ENCODE measurements at regions of chr9 and their contacts with region 1.

Region 1: GRCh38 chr9:19732441-19732951 is 56.3 kb downstream of the SLC24A2 start:
- DNase-seq: no peak
- ATAC-seq: no peak
- H3K4me3 ChIP-seq: no peak overlapping the region
- H3K27ac ChIP-seq: no peak overlapping the region
- H3K4me1 ChIP-seq: no peaks in the 10 kb centered on the region
- H3K27me3 ChIP-seq: no peaks in the 10 kb centered on the region
- CTCF ChIP-seq: no peak
- POLR2A ChIP-seq: no peak
- RAD21 ChIP-seq: no peak

Region 2: GRCh38 chr9:19703702-19704101 is 28.8 kb before region 1 on chr9:
- CTCF ChIA-PET with region 1: no interaction called
- POLR2A ChIA-PET with region 1: no interaction called
- dilution Hi-C with region 1: no loop called
- in situ Hi-C with region 1: no loop called
- intact Hi-C with region 1: loop called (anchors 2 kb)
- DNase-seq: no peak
- ATAC-seq: no peak
- H3K4me3 ChIP-seq: no peak overlapping the region
- H3K27ac ChIP-seq: no peak overlapping the region
- H3K4me1 ChIP-seq: no peaks in the 10 kb centered on the region
- H3K27me3 ChIP-seq: no peaks in the 10 kb centered on the region
- CTCF ChIP-seq: no peak
- POLR2A ChIP-seq: no peak
- RAD21 ChIP-seq: no peak

Region 3: GRCh38 chr9:19922476-19923118 is 190.1 kb after region 1 on chr9:
- CTCF ChIA-PET with region 1: no interaction called
- POLR2A ChIA-PET with region 1: no interaction called
- dilution Hi-C with region 1: no loop called
- in situ Hi-C with region 1: no loop called
- intact Hi-C with region 1: no loop called
- DNase-seq: peak; percentile 46
- ATAC-seq: peak; percentile 53
- H3K4me3 ChIP-seq: no peak overlapping the region
- H3K27ac ChIP-seq: no peak overlapping the region
- H3K4me1 ChIP-seq: no peaks in the 10 kb centered on the region
- H3K27me3 ChIP-seq: peaks cover 15% of the 10 kb centered on the region
- CTCF ChIP-seq: peak; percentile 58
- POLR2A ChIP-seq: no peak
- RAD21 ChIP-seq: peak; percentile 66

Measured in IMR-90 (cell line).